Activated CD4-positive, alpha-beta T cell treated with anti-CD3 and anti-CD28 coated beads, Interleukin-2, amount 10 ng/mL, durations not matched to agents 24 days and 14 days (primary cell): ENCODE measurements at regions of chr7 and their contacts with region 1.

Region 1: GRCh38 chr7:74083117-74083876 is at the start of gene LIMK1:
- DNase-seq: peak; percentile 96
- H3K4me3 Mint-ChIP-seq: peak within 1 kb of the TSS; percentile 87
- H3K27ac Mint-ChIP-seq: peak within 1 kb of the TSS; percentile 89
- H3K4me1 Mint-ChIP-seq: peaks cover 17% of the 10 kb centered on the region
- H3K27me3 Mint-ChIP-seq: no peaks in the 10 kb centered on the region
- total RNA-seq, gene LIMK1: 25.3 and 26.3 TPM in 2 replicates

Region 2: GRCh38 chr7:74068393-74069085 is 14.8 kb before region 1 on chr7:
- intact Hi-C with region 1: loop called (anchors 2 kb)
- DNase-seq: no peak
- H3K4me3 Mint-ChIP-seq: no peak overlapping the region
- H3K27ac Mint-ChIP-seq: peak overlapping the region; percentile 5
- H3K4me1 Mint-ChIP-seq: peaks cover 7% of the 10 kb centered on the region
- H3K27me3 Mint-ChIP-seq: no peaks in the 10 kb centered on the region

Region 3: DNA sequence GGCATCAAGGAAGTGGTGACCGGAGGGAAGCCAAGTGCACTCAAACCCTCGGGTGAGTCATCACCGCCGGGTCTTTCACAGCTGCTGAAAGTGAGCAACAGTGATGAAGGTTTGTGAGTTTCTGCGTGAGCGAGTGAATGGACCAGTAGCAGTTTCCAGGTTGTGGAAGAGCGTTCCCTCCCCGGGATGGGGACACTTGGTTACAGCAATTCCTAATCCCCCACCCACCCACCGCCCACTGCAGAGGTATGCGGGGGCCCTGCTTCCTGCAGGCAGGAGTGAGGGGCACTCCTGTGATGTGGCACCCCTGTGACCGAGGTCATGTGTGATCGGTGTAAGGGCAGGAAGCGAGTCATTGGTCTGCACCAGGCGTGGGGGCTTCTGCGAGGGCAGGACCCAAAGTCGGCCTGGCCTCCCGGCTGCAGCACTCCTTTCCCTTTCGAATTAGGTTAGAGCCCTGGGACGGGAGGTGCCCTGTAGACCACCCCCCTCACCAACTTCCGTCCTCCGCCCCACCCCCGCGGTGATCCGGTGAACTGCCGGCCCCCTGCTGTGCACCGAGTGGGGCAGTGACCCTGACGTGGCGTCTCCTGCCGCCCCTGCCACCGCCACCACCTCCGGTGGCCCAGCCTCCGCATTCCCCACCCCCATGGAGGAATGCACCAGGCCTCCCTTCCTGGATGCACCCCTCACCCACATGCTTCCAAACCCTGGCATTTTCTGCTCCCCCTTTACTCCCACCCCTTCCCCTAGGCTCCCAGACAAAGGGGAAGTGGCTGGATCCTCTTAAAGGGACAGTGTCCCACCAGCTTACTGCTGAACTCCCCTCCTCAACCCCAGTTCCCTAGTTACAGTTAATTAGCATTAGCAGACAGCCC is 11.2 kb after region 1 on chr7:
- intact Hi-C with region 1: loop called (anchors 1 kb)
- DNase-seq: peak; percentile 91
- H3K4me3 Mint-ChIP-seq: peak overlapping the region; percentile 87
- H3K27ac Mint-ChIP-seq: peak overlapping the region; percentile 97
- H3K4me1 Mint-ChIP-seq: peaks cover 25% of the 10 kb centered on the region
- H3K27me3 Mint-ChIP-seq: no peaks in the 10 kb centered on the region

Region 4: GRCh38 chr7:74173866-74174605 is 90.7 kb after region 1 on chr7 and contains the start of gene EIF4H:
- intact Hi-C with region 1: loop called (anchors 1 kb)
- DNase-seq: peak; percentile 99
- H3K4me3 Mint-ChIP-seq: peak within 1 kb of the TSS; percentile 91
- H3K27ac Mint-ChIP-seq: peak within 1 kb of the TSS; percentile 94
- H3K4me1 Mint-ChIP-seq: peaks cover 39% of the 10 kb centered on the region
- H3K27me3 Mint-ChIP-seq: no peaks in the 10 kb centered on the region
- total RNA-seq, gene EIF4H: 384 and 389 TPM in 2 replicates

Region 5: DNA sequence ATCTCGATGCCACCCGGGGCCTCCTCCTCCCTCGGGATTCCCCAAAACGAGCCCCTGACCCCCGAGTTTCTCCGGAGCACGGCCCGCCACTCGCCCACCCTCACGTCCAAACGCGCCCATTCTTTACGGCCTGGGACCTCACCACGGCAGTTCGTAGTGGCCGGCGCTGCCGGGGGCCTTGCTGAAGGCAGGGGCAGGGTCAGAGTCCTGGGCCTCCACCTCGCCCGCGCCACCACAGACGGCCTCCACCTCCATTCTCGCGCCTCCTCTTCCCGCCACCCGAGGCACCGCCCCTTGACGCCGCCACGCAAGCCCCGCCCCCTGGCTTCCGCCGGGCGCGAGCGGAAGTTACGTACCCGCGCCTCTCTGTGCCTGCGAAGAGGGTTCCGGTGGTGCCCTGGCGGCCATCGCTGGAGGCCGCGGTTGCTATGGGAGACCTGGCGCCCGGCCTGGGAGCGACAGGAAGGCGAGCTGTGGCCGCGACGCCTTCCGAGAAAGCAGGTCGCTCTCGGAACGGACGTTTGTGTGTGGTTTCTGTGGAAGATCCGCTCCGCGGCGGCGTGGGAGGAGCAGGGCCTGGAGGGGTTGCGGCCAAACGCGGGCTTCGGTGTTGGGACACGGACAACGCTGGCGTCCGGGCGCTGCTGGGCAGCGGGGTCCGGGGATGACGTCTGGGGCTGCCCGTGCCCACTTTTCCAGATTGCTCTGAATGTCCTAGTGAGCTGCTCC is 171.0 kb after region 1 on chr7 and contains the start of gene RFC2:
- intact Hi-C with region 1: loop called (anchors 2 kb)
- DNase-seq: peak; percentile 100
- H3K4me3 Mint-ChIP-seq: peak within 1 kb of the TSS; percentile 98
- H3K27ac Mint-ChIP-seq: peak within 1 kb of the TSS; percentile 96
- H3K4me1 Mint-ChIP-seq: peaks cover 23% of the 10 kb centered on the region
- H3K27me3 Mint-ChIP-seq: no peaks in the 10 kb centered on the region
- total RNA-seq, gene RFC2: 88.0 and 94.7 TPM in 2 replicates

Region 6: GRCh38 chr7:74449809-74450397 is 366.6 kb after region 1 on chr7:
- intact Hi-C with region 1: loop called (anchors 5 kb)
- DNase-seq: peak; percentile 91
- H3K4me3 Mint-ChIP-seq: no peak overlapping the region
- H3K27ac Mint-ChIP-seq: no peak overlapping the region
- H3K4me1 Mint-ChIP-seq: peaks cover 13% of the 10 kb centered on the region
- H3K27me3 Mint-ChIP-seq: peaks cover 15% of the 10 kb centered on the region